Heart right ventricle (tissue), 16 donors: ENCODE measurements at regions of chr19 and their contacts with region 1.

Region 1: GRCh38 chr19:17305517-17306284 is at the start of gene MRPL34:
- DNase-seq: peak; percentile 93
- ATAC-seq: peak; percentile 50 to 83 (median 70)
- H3K4me3 ChIP-seq: peak within 1 kb of the TSS; percentile 63 to 88 (median 75)
- H3K27ac ChIP-seq: peak within 1 kb of the TSS; percentile 83 to 98 (median 93)
- H3K4me1 ChIP-seq: peaks cover 12 to 65% (median 61%) of the 10 kb centered on the region in 9 donors
- H3K27me3 ChIP-seq: no peaks in the 10 kb centered on the region
- CTCF ChIP-seq: peak; percentile 48 to 87 (median 70)
- total RNA-seq, gene MRPL34: 122 to 259 (median 151) TPM

Region 2: GRCh38 chr19:17336872-17337722 is 31.4 kb after region 1 on chr19 and contains the start of gene GTPBP3:
- intact Hi-C with region 1: loop called in 1 of 10 experiments (anchors 2 kb)
- DNase-seq: peak; percentile 94 to 97
- ATAC-seq: peak; percentile 89 to 95 (median 93)
- H3K4me3 ChIP-seq: peak within 1 kb of the TSS; percentile 61 to 84 (median 77)
- H3K27ac ChIP-seq: peak within 1 kb of the TSS; percentile 66 to 95 (median 92)
- H3K4me1 ChIP-seq: peaks cover 8 to 45% (median 36%) of the 10 kb centered on the region in 9 donors
- H3K27me3 ChIP-seq: no peaks in the 10 kb centered on the region
- CTCF ChIP-seq: no peak
- total RNA-seq, gene GTPBP3: 8.0 to 12.4 (median 9.8) TPM